Activated B cell treated with CpG ODN at 0.5 μM for 24 hours (primary cell): ENCODE measurements at regions of chr6 and their contacts with region 1.

Region 1: DNA sequence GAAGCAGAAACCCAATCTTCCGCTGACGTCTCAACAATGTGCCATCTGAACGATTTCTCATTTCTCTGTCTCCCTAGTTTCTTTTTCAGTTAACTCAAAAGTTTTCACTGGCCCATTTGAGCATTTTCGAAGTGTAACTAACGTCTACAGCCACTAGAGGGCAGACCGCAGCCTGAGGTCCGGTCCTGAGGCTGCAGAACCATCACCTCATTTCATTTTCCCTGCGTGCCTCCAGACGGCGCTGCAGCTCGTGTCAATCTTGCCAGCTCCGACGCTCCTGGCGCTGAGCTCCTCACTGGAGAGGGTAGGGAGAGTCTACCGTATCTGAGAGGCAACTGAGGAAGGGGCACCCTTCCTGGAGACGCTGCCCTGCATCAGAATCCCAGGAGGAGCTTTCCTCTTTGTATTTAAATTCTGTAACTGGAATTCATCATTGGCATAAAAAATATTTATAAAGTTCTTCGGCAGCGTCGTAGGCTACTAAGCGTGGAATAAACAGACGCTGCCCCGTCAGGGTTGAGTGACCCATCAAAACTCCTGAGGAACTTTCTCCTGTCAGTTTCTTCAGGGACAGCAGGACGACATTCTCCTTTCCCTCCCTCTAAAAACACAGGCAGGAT is 28.5 kb upstream of the DTNBP1 start:
- DNase-seq: peak; percentile 64
- ATAC-seq: peak; percentile 99
- H3K4me3 Mint-ChIP-seq: peak overlapping the region; percentile 17
- H3K27ac Mint-ChIP-seq: no peak overlapping the region
- H3K4me1 Mint-ChIP-seq: peaks cover 9% of the 10 kb centered on the region
- H3K27me3 Mint-ChIP-seq: peaks cover 2% of the 10 kb centered on the region
- CTCF ChIP-seq: peak; percentile 95

Region 2: GRCh38 chr6:16168858-16169257 is 477.5 kb after region 1 on chr6:
- CTCF ChIA-PET with region 1: interaction called, 17 read pairs
- POLR2A ChIA-PET with region 1: no interaction called
- intact Hi-C with region 1: loop called (anchors 1 kb)
- DNase-seq: no peak
- ATAC-seq: peak; percentile 37
- H3K4me3 Mint-ChIP-seq: no peak overlapping the region
- H3K27ac Mint-ChIP-seq: no peak overlapping the region
- H3K4me1 Mint-ChIP-seq: no peaks in the 10 kb centered on the region
- H3K27me3 Mint-ChIP-seq: peaks cover 7% of the 10 kb centered on the region
- CTCF ChIP-seq: no peak

Region 3: DNA sequence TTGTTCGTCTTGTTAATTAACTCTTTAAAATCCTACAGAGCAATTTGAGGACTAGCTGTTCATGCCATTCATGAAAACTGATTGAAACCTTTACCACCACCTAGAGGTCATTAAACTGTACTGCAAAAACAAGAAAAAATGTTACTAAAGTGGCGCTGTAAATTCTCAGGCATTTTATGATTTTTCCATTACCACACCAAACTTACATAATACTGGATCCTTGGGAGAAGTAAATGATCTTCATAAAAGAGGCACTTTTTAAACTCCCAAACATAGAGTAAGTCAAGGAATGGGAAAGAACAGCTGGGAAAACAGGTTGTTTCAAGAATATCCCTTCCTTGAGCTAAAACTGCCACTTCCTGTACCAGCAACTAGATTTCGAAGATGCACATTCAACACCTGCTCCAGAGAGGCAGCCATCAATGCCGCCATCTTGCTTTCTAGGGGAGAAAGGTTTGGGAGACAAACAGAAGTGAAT is 491.9 kb after region 1 on chr6:
- CTCF ChIA-PET with region 1: interaction called, 116 read pairs
- POLR2A ChIA-PET with region 1: interaction called, 6 read pairs
- intact Hi-C with region 1: loop called (anchors 1 kb)
- DNase-seq: no peak
- ATAC-seq: peak; percentile 56
- H3K4me3 Mint-ChIP-seq: no peak overlapping the region
- H3K27ac Mint-ChIP-seq: no peak overlapping the region
- H3K4me1 Mint-ChIP-seq: peaks cover 19% of the 10 kb centered on the region
- H3K27me3 Mint-ChIP-seq: no peaks in the 10 kb centered on the region
- CTCF ChIP-seq: peak; percentile 35

Region 4: DNA sequence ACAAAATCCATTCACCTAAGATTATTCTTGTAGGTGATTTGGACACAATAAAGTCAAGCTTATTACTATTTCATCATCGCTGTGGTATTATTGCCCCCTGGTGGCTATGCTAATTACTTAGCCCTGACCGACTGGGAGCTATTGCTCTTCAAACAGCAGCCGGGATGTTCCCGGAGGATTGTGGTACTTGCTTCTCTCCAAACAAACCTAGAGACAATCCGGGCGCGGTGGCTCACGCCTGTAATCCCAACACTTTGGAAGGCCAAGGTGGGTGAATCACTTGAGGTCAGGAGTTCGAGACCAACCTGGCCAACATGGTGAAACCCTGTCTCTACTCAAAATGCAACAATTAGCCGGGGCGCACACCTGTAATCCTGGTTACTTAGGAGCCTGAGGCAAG is 1395.1 kb after region 1 on chr6:
- CTCF ChIA-PET with region 1: interaction called, 4 read pairs
- POLR2A ChIA-PET with region 1: no interaction called
- intact Hi-C with region 1: loop called (anchors 2 kb)
- DNase-seq: no peak
- ATAC-seq: no peak
- H3K4me3 Mint-ChIP-seq: no peak overlapping the region
- H3K27ac Mint-ChIP-seq: no peak overlapping the region
- H3K4me1 Mint-ChIP-seq: no peaks in the 10 kb centered on the region
- H3K27me3 Mint-ChIP-seq: peaks cover 3% of the 10 kb centered on the region
- CTCF ChIP-seq: no peak